GM12878 (cell line): ENCODE measurements at regions of chr14 and their contacts with region 1.

Region 1: DNA sequence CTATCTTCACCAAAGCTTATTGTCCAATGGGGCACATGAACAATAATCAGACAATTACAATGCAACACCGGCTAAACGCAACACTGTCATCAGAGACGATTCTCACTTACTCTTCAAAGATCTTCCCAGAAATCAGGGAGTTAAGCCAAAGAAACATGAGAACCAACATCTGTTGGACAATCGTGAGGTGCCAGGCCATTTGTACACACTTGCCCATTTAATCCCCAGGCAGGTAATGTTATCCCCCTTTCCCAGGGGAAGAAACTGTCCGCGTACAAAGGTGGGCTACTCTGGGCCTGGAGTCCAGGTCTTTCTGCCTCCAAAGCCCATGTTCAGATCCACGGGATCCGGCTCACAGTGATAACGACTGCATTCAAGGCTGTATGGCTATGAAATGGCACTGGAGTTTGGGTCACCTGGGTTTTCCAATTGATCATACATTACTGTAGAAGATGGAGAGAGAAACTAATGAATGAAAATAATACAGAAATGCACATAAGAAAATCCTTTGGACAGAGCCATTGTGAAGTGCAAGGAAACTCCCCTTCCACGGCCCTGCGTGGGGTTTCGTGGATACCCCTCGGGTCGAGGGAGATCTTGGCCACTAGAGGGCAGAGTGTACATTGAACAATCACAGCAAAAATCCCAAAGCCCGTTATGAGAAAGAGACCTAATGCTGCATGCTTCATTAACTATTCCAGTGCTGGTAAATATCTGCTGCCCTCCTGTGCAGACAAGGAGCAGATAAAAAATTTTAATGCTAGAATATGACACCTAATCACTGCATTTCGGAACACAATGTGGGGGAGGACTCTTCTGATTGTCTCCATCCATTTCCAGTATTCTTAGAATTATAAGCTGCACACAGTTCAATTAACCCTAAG is 111.4 kb downstream of the EGLN3 start:
- DNase-seq: no peak
- ATAC-seq: peak; percentile 84
- H3K4me3 ChIP-seq: no peak overlapping the region
- H3K27ac ChIP-seq: no peak overlapping the region
- H3K4me1 ChIP-seq: no peaks in the 10 kb centered on the region
- H3K27me3 ChIP-seq: peaks cover 0 to 3% of the 10 kb centered on the region in 2 experiments; a peak in 1 of 4 replicates
- CTCF ChIP-seq: peak; percentile 73 to 85 (median 77)
- EP300 ChIP-seq: no peak
- POLR2A ChIP-seq: no peak
- RAD21 ChIP-seq: peak; percentile 79

Region 2: DNA sequence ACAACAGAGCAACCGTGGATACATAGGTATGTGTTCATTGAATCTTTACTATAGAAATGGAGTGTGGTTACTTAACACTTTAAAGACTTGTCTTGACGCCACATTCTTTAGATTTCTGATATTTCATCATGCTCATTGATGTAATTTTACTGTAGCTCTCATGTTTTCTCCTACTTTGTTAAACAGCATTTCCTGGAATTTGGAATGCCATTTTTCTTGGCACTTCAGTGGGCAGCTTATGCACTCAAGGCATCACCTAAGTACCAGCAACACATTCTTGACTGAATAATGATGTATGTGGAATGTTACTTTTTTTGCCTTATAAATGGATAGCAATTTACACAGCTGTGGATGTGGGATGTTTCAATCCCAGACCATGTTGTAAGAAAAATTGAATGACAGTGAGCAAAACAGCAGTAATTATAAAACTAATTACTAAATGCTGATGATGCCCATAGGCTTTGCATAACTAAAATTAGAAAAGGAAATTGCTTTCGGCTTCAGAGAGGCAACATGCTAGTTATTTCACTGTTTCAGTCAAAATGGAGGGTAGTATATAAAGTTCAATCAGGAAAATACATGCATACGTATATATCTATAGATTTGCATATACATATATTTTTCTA is 602.2 kb before region 1 on chr14:
- CTCF ChIA-PET with region 1: no interaction called
- POLR2A ChIA-PET with region 1: no interaction called
- RAD21 ChIA-PET with region 1: no interaction called
- SMC1A ChIA-PET with region 1: no interaction called
- in situ Hi-C with region 1: no loop called
- intact Hi-C with region 1: no loop called
- DNase-seq: no peak
- ATAC-seq: no peak
- H3K4me3 ChIP-seq: no peak overlapping the region
- H3K27ac ChIP-seq: no peak overlapping the region
- H3K4me1 ChIP-seq: no peaks in the 10 kb centered on the region
- H3K27me3 ChIP-seq: no peaks in the 10 kb centered on the region
- CTCF ChIP-seq: no peak
- EP300 ChIP-seq: no peak
- POLR2A ChIP-seq: no peak
- RAD21 ChIP-seq: no peak

Region 3: DNA sequence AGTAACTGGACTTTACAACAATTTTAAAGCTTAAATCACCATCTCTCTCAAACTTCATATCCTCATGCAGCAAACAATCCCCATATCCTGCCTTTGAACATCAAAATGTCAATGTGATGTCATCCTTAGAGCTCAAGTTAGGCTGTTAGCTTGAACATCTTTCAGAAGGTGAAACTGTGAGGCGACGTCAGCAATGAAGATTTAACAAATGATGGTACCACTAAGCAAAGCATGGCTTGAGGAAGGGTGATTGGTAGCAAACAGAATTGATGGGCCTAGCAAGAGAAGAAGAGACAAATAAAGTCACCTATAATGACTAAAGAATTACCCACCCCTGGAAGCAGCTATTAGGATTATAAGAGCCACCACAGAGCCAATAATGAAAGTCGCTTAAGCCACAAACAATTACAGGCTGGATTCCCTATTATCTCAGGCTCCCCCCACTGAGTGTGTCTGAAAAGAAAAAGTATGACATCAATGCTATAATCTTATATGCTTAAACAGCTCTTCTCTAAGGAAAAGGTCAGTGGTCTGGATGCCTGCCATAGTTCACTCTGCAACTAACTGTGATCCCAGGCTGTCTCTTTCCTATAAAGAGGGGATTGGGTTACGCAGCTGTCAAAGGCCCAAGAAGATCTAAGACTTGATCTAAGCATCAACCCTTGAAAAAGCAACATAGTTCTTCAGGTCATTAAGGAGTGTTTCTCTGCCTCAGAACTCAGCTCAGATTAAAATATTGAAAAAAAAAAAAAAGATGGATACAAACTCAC is 93.3 kb after region 1 on chr14:
- CTCF ChIA-PET with region 1: interaction called, 7 read pairs
- POLR2A ChIA-PET with region 1: no interaction called
- RAD21 ChIA-PET with region 1: interaction called, 15 read pairs
- SMC1A ChIA-PET with region 1: interaction called, 12 read pairs
- in situ Hi-C with region 1: no loop called
- intact Hi-C with region 1: no loop called
- DNase-seq: no peak
- ATAC-seq: no peak
- H3K4me3 ChIP-seq: no peak overlapping the region
- H3K27ac ChIP-seq: no peak overlapping the region
- H3K4me1 ChIP-seq: no peaks in the 10 kb centered on the region
- H3K27me3 ChIP-seq: no peaks in the 10 kb centered on the region
- CTCF ChIP-seq: no peak
- EP300 ChIP-seq: no peak
- POLR2A ChIP-seq: no peak
- RAD21 ChIP-seq: no peak

Region 4: DNA sequence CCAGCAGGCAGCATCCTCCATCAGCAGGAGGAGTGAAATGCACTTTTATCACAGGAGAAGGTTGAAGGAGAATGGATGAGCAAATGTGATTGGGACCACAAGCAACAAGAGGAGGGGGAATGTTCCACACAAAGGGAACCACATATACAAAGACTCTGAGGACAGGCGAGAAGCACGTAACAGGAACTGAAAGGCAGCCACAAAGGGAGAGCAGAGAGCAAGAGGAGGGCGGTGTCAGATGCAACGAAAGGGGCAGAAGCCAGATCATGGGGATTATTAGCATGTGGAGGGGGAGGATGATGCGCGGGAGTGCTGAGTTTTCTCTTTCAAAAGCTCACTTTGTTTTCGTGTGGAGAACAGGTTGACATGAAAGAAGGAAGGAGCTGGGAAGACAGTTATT is 381.5 kb after region 1 on chr14:
- CTCF ChIA-PET with region 1: interaction called, 196 read pairs
- POLR2A ChIA-PET with region 1: no interaction called
- RAD21 ChIA-PET with region 1: interaction called, 11 read pairs
- SMC1A ChIA-PET with region 1: interaction called, 45 read pairs
- in situ Hi-C with region 1: loop called (anchors 5 kb)
- intact Hi-C with region 1: no loop called
- DNase-seq: peak; percentile 40
- ATAC-seq: peak; percentile 99
- H3K4me3 ChIP-seq: no peak overlapping the region
- H3K27ac ChIP-seq: no peak overlapping the region
- H3K4me1 ChIP-seq: no peaks in the 10 kb centered on the region
- H3K27me3 ChIP-seq: peaks cover 0 to 2% of the 10 kb centered on the region in 2 experiments; a peak in 1 of 4 replicates
- CTCF ChIP-seq: no peak
- EP300 ChIP-seq: peak in 1 of 2 experiments; percentile 83; a peak in 2 of 4 replicates
- POLR2A ChIP-seq: no peak
- RAD21 ChIP-seq: no peak

Region 5: GRCh38 chr14:34237081-34237480 is 397.6 kb after region 1 on chr14:
- CTCF ChIA-PET with region 1: interaction called, 5 read pairs
- POLR2A ChIA-PET with region 1: no interaction called
- RAD21 ChIA-PET with region 1: interaction called, 5 read pairs
- SMC1A ChIA-PET with region 1: interaction called, 14 read pairs
- in situ Hi-C with region 1: no loop called
- intact Hi-C with region 1: no loop called
- DNase-seq: no peak
- ATAC-seq: no peak
- H3K4me3 ChIP-seq: no peak overlapping the region
- H3K27ac ChIP-seq: no peak overlapping the region
- H3K4me1 ChIP-seq: no peaks in the 10 kb centered on the region
- H3K27me3 ChIP-seq: no peaks in the 10 kb centered on the region; a peak in 1 of 4 replicates
- CTCF ChIP-seq: no peak
- EP300 ChIP-seq: no peak
- POLR2A ChIP-seq: no peak
- RAD21 ChIP-seq: no peak

Region 6: DNA sequence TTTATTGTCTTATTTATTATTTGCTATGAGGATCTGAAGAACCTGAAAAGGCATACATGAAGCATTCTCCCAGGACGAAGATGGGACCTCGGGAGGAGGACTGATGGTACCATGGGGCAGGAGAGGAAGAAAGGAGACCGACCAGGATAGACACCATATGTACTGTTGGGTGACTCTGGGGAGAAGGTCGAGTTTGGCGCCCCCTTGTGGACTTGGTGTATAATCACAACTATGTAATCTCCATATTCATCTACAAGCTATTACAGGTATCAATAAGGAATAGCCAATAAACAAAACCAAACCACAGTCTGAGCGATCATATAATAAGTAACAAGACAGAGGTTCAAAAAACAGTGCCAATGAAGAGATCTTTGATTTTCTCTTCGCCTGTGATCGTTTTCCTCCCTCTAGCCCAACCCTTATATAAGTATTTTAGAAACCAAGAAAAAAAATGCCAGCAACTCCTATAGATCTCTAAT is 483.5 kb after region 1 on chr14:
- CTCF ChIA-PET with region 1: interaction called, 50 read pairs
- POLR2A ChIA-PET with region 1: no interaction called
- RAD21 ChIA-PET with region 1: interaction called, 6 read pairs
- SMC1A ChIA-PET with region 1: interaction called, 7 read pairs
- in situ Hi-C with region 1: no loop called
- intact Hi-C with region 1: loop called (anchors 5 kb)
- DNase-seq: no peak
- ATAC-seq: peak; percentile 95
- H3K4me3 ChIP-seq: no peak overlapping the region
- H3K27ac ChIP-seq: no peak overlapping the region
- H3K4me1 ChIP-seq: no peaks in the 10 kb centered on the region
- H3K27me3 ChIP-seq: no peaks in the 10 kb centered on the region
- CTCF ChIP-seq: peak; percentile 70 to 72 (median 71)
- EP300 ChIP-seq: no peak
- POLR2A ChIP-seq: no peak
- RAD21 ChIP-seq: no peak